ENCODE measurements at regions of chr4 and their contacts with region 1.

Region 1: GRCh38 chr4:38663801-38664705 is at the start of gene KLF3:
- DNase-seq: peak; percentile 86
- H3K4me3 Mint-ChIP-seq: peak within 1 kb of the TSS; percentile 83
- H3K27ac Mint-ChIP-seq: peak within 1 kb of the TSS; percentile 68
- H3K4me1 Mint-ChIP-seq: peaks cover 61% of the 10 kb centered on the region
- H3K27me3 Mint-ChIP-seq: no peaks in the 10 kb centered on the region
- total RNA-seq, gene KLF3: 9.1 to 9.9 TPM

Region 2: GRCh38 chr4:38619996-38620789 is 43.9 kb before region 1 on chr4:
- CTCF ChIA-PET with region 1: interaction called, 3 read pairs
- POLR2A ChIA-PET with region 1: no interaction called
- intact Hi-C with region 1: loop called (anchors 2 kb)
- DNase-seq: no peak
- H3K4me3 Mint-ChIP-seq: no peak overlapping the region
- H3K27ac Mint-ChIP-seq: no peak overlapping the region
- H3K4me1 Mint-ChIP-seq: peaks cover 20% of the 10 kb centered on the region
- H3K27me3 Mint-ChIP-seq: no peaks in the 10 kb centered on the region

Region 3: DNA sequence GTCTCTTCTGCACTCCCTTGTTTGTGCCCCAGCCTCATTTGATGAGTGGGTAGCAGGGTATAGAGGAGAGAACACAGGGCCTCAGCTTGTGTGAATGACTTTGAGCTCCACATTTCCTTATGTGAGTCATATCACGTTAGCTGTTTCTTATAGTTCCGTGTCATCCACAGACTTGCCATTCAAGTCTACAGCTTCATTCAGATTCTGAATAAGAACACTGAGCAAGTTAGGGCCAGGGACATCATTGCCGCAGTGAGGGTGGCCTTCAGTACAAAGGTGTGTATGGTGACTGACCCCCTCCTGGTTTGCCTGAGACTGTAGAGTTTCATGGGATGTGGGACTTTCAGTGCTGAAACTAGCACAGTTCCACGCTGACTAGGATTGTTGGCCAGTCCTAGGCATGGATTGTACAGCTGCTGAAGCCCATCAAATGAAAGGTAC is 23.5 kb after region 1 on chr4:
- CTCF ChIA-PET with region 1: interaction called, 4 read pairs
- POLR2A ChIA-PET with region 1: no interaction called
- intact Hi-C with region 1: loop called (anchors 2 kb)
- DNase-seq: peak; percentile 48
- H3K4me3 Mint-ChIP-seq: no peak overlapping the region
- H3K27ac Mint-ChIP-seq: no peak overlapping the region
- H3K4me1 Mint-ChIP-seq: peaks cover 49% of the 10 kb centered on the region
- H3K27me3 Mint-ChIP-seq: no peaks in the 10 kb centered on the region

Region 4: DNA sequence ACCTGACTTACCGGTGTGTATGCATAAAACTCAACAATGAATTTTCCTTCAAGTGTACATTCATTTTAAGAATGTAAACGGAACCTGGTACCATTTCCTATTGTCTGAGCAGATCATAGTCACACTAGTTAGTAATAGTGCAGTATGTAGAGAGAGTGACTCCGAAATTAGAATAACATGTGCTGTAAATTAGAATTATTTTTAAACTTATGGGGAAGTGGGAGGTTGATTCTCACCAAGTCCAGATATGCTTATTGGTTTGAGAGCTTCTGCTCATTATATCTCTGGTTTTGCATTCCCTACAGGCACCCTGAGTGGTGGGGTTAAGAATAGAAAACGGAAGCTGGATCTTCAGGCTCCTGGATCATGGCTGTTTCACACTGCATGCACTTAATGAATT is 39.6 kb after region 1 on chr4:
- CTCF ChIA-PET with region 1: no interaction called
- POLR2A ChIA-PET with region 1: no interaction called
- intact Hi-C with region 1: no loop called
- DNase-seq: no peak
- H3K4me3 Mint-ChIP-seq: no peak overlapping the region
- H3K27ac Mint-ChIP-seq: no peak overlapping the region
- H3K4me1 Mint-ChIP-seq: peaks cover 11% of the 10 kb centered on the region
- H3K27me3 Mint-ChIP-seq: no peaks in the 10 kb centered on the region